ENCODE measurements at regions of chr15 and their contacts with region 1.

Region 1: GRCh38 chr15:56052395-56053045 is 59.1 kb upstream of the NEDD4 start:
- DNase-seq: peak in 1 of 2 experiments; percentile 37
- H3K4me3 ChIP-seq: no peak overlapping the region
- H3K4me3 Mint-ChIP-seq: no peak overlapping the region
- H3K27ac Mint-ChIP-seq: peak overlapping the region; percentile 75
- H3K4me1 ChIP-seq: peaks cover 16% of the 10 kb centered on the region
- H3K4me1 Mint-ChIP-seq: peaks cover 10% of the 10 kb centered on the region
- H3K27me3 ChIP-seq: no peaks in the 10 kb centered on the region
- H3K27me3 Mint-ChIP-seq: no peaks in the 10 kb centered on the region
- CTCF ChIP-seq: peak; percentile 56 to 72

Region 2: GRCh38 chr15:55884223-55884622 is 168.3 kb before region 1 on chr15:
- CTCF ChIA-PET with region 1: no interaction called
- POLR2A ChIA-PET with region 1: no interaction called
- intact Hi-C with region 1: no loop called
- DNase-seq: no peak
- H3K4me3 ChIP-seq: no peak overlapping the region
- H3K4me3 Mint-ChIP-seq: no peak overlapping the region
- H3K27ac Mint-ChIP-seq: no peak overlapping the region
- H3K4me1 ChIP-seq: peaks cover 6% of the 10 kb centered on the region; the same call in 1 of the 2 replicates
- H3K4me1 Mint-ChIP-seq: no peaks in the 10 kb centered on the region
- H3K27me3 ChIP-seq: no peaks in the 10 kb centered on the region
- H3K27me3 Mint-ChIP-seq: no peaks in the 10 kb centered on the region
- CTCF ChIP-seq: no peak

Region 3: GRCh38 chr15:55897560-55898336 is 154.8 kb before region 1 on chr15:
- CTCF ChIA-PET with region 1: no interaction called
- POLR2A ChIA-PET with region 1: no interaction called
- intact Hi-C with region 1: loop called (anchors 2 kb)
- DNase-seq: peak; percentile 55 to 68
- H3K4me3 ChIP-seq: no peak overlapping the region
- H3K4me3 Mint-ChIP-seq: no peak overlapping the region
- H3K27ac Mint-ChIP-seq: no peak overlapping the region
- H3K4me1 ChIP-seq: peaks cover 5% of the 10 kb centered on the region; the same call in 1 of the 2 replicates
- H3K4me1 Mint-ChIP-seq: no peaks in the 10 kb centered on the region
- H3K27me3 ChIP-seq: no peaks in the 10 kb centered on the region
- H3K27me3 Mint-ChIP-seq: no peaks in the 10 kb centered on the region
- CTCF ChIP-seq: peak; percentile 73 to 95

Region 4: DNA sequence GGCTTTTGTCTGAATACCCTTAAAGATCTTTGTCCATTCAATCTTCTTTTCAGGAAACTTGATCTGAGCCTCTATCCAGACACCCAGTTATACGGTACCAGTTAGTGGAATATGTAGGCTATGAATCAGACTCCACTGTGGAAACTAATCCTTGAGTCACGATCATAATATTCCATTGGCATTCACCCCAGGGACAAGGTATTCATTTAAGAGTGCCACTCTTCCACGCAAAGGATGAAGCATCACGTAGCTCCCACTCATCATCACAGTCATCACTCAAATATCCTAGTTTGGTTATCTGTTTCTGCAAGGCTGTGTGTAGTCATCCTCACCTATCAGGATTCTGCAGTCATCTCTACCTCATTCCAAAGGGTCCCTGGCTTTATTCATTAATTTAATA is 144.7 kb before region 1 on chr15:
- CTCF ChIA-PET with region 1: no interaction called
- POLR2A ChIA-PET with region 1: no interaction called
- intact Hi-C with region 1: no loop called
- DNase-seq: no peak
- H3K4me3 ChIP-seq: no peak overlapping the region
- H3K4me3 Mint-ChIP-seq: no peak overlapping the region
- H3K27ac Mint-ChIP-seq: no peak overlapping the region
- H3K4me1 ChIP-seq: no peaks in the 10 kb centered on the region
- H3K4me1 Mint-ChIP-seq: no peaks in the 10 kb centered on the region
- H3K27me3 ChIP-seq: no peaks in the 10 kb centered on the region
- H3K27me3 Mint-ChIP-seq: no peaks in the 10 kb centered on the region
- CTCF ChIP-seq: no peak

Region 5: DNA sequence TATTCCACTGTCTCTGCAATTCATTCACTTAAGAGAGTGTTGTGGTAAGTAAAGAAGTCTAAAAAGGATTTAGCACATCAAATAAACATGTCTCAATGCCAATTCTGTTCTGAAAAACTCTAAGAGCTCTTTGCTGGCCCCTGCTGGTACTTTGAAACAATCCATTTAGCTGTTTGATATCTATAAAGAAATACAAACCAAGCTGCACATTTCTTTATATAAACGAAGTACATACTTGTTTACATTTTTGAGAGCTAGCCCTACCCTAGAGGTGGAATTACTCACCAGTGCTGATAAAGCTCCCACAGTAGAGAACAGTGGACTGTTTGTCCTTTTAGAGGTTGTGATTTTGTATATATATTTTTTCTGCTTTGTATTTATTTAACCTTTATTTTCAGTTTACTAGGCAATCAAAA is 134.6 kb before region 1 on chr15:
- CTCF ChIA-PET with region 1: interaction called, 5 read pairs
- POLR2A ChIA-PET with region 1: no interaction called
- intact Hi-C with region 1: loop called (anchors 5 kb)
- DNase-seq: peak in 1 of 2 experiments; percentile 28
- H3K4me3 ChIP-seq: no peak overlapping the region
- H3K4me3 Mint-ChIP-seq: no peak overlapping the region
- H3K27ac Mint-ChIP-seq: no peak overlapping the region
- H3K4me1 ChIP-seq: no peaks in the 10 kb centered on the region
- H3K4me1 Mint-ChIP-seq: no peaks in the 10 kb centered on the region
- H3K27me3 ChIP-seq: no peaks in the 10 kb centered on the region
- H3K27me3 Mint-ChIP-seq: no peaks in the 10 kb centered on the region
- CTCF ChIP-seq: peak; percentile 52 to 62

Region 6: GRCh38 chr15:56017920-56018319 is 34.6 kb before region 1 on chr15:
- CTCF ChIA-PET with region 1: no interaction called
- POLR2A ChIA-PET with region 1: no interaction called
- intact Hi-C with region 1: loop called (anchors 2 kb)
- DNase-seq: no peak
- H3K4me3 ChIP-seq: no peak overlapping the region
- H3K4me3 Mint-ChIP-seq: no peak overlapping the region
- H3K27ac Mint-ChIP-seq: no peak overlapping the region
- H3K4me1 ChIP-seq: no peaks in the 10 kb centered on the region
- H3K4me1 Mint-ChIP-seq: no peaks in the 10 kb centered on the region
- H3K27me3 ChIP-seq: no peaks in the 10 kb centered on the region
- H3K27me3 Mint-ChIP-seq: no peaks in the 10 kb centered on the region
- CTCF ChIP-seq: no peak

Region 7: GRCh38 chr15:56040081-56041035 is 12.2 kb before region 1 on chr15:
- CTCF ChIA-PET with region 1: interaction called, 4 read pairs
- POLR2A ChIA-PET with region 1: no interaction called
- intact Hi-C with region 1: loop called (anchors 1 kb)
- DNase-seq: peak; percentile 85 to 88
- H3K4me3 ChIP-seq: no peak overlapping the region
- H3K4me3 Mint-ChIP-seq: peak overlapping the region; percentile 33
- H3K27ac Mint-ChIP-seq: peak overlapping the region; percentile 91
- H3K4me1 ChIP-seq: peaks cover 90% of the 10 kb centered on the region
- H3K4me1 Mint-ChIP-seq: peaks cover 63% of the 10 kb centered on the region
- H3K27me3 ChIP-seq: no peaks in the 10 kb centered on the region
- H3K27me3 Mint-ChIP-seq: no peaks in the 10 kb centered on the region
- CTCF ChIP-seq: no peak

Region 8: GRCh38 chr15:56098195-56098863 is 45.8 kb after region 1 on chr15:
- CTCF ChIA-PET with region 1: interaction called, 5 read pairs
- POLR2A ChIA-PET with region 1: no interaction called
- intact Hi-C with region 1: loop called (anchors 2 kb)
- DNase-seq: no peak
- H3K4me3 ChIP-seq: no peak overlapping the region
- H3K4me3 Mint-ChIP-seq: no peak overlapping the region
- H3K27ac Mint-ChIP-seq: no peak overlapping the region
- H3K4me1 ChIP-seq: peaks cover 12% of the 10 kb centered on the region; the same call in 1 of the 2 replicates
- H3K4me1 Mint-ChIP-seq: no peaks in the 10 kb centered on the region
- H3K27me3 ChIP-seq: no peaks in the 10 kb centered on the region
- H3K27me3 Mint-ChIP-seq: no peaks in the 10 kb centered on the region
- CTCF ChIP-seq: peak in 1 of 2 experiments; percentile 8